ENCODE measurements at regions of chr6 and their contacts with region 1.

Region 1: GRCh38 chr6:32984605-32985389 is 16.4 kb downstream of the BRD2 start:
- DNase-seq: peak; percentile 97
- H3K4me3 ChIP-seq: no peak overlapping the region
- H3K27ac ChIP-seq: peak overlapping the region; percentile 20
- H3K4me1 ChIP-seq: peaks cover 26% of the 10 kb centered on the region
- H3K27me3 ChIP-seq: no peaks in the 10 kb centered on the region
- CTCF ChIP-seq: peak; percentile 91

Region 2: GRCh38 chr6:32933636-32934085 is 51.1 kb before region 1 on chr6:
- intact Hi-C with region 1: loop called (anchors 2 kb)
- DNase-seq: peak; percentile 89
- H3K4me3 ChIP-seq: no peak overlapping the region
- H3K27ac ChIP-seq: no peak overlapping the region
- H3K4me1 ChIP-seq: no peaks in the 10 kb centered on the region
- H3K27me3 ChIP-seq: no peaks in the 10 kb centered on the region
- CTCF ChIP-seq: peak; percentile 74